H1 (cell line): ENCODE measurements at regions of chr11 and their contacts with region 1.

Region 1: DNA sequence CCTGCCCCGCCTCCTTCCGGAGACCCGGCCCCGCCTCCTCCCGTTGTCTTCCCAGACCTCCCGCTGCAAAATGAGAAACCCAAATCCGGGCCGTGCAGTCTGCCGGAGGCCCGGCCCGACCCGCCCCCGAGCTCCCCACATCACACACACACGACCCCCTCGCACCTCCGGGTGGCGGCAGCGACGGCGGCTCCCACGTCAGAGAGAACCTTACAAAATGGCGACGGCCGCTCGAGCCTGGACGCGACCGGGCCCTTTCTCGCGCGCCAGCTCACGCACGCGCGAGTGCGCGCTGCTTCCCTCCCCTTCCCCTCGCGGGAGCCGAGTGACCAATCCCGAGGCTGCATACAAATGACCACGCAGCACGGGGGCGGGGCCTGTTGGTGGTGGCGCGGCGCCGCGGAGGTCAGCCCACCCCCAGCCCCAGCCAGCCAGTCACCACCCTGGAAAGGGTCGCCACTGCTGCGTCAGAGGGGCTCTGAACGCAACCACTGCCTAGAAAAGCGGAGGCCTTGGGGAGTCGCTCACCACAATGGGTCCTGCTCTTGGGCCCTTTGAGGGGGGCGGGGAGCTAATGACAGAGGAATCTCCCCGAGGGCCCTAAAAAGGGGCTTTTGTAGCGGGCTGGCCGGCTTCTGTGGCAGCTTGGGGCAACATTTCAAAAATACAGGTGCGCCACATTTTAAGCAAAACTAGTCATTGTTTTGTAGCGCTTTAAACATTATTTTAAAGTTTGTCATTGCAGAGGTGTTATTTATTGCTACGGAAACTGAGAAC is at the start of gene RBM4B:
- DNase-seq: peak; percentile 92 to 98
- H3K4me3 ChIP-seq: peak within 1 kb of the TSS; percentile 69 to 86 (median 78)
- H3K27ac ChIP-seq: peak within 1 kb of the TSS; percentile 88
- H3K4me1 ChIP-seq: peaks cover 3 to 15% (median 8%) of the 10 kb centered on the region in 4 experiments; a peak in 5 of 7 replicates
- H3K27me3 ChIP-seq: no peaks in the 10 kb centered on the region
- CTCF ChIP-seq: no peak
- EP300 ChIP-seq: no peak
- POLR2A ChIP-seq: peak; percentile 77 to 88
- RAD21 ChIP-seq: no peak
- total RNA-seq, gene RBM4B: 27.5 and 30.6 TPM in 2 replicates

Region 2: DNA sequence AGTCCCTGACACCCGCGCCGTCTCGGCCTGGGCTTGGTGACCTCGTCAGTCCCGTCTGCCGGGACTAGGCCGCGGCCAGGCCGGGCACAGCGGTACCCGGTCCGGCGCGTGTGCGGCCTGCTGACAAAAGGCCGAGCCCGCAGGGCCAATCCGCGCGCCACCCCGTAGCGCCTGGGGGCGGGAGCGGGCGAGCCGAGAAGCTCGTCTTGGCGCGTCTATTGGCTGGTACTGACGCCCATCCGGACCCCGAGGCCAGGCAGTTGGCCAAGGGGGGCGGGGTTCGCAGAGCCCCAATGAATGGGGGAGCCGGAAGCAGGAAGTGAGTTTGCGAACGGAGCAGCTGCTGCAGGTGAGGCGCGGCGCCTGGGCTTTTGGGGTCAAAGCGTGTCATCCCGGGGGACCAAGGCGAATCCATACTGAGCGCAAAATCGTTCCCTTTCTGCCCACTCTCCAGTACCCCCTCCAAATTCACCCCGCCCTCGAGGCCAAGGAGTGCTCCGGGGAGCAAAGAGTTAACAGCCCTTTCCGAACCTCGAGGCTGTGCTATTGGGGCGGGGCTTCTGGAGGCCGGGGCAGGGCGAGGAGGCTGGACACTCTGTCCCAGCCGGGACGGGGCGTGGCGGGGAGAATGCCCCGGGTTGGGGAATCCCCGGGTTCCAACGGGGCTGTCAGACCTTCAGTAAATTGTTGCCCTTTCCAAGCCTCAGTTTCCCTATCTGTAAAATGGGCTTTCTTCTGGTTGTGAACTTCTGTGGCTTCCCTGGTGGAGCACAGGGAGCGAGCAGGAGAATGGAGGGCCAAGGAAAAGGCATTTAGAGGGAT is 197.5 kb before region 1 on chr11 and contains the start of gene DPP3:
- CTCF ChIA-PET with region 1: interaction called, 4 read pairs
- POLR2A ChIA-PET with region 1: interaction called, 27 read pairs
- DNase-seq: peak; percentile 93 to 98
- H3K4me3 ChIP-seq: peak within 1 kb of the TSS; percentile 76 to 94 (median 90)
- H3K27ac ChIP-seq: peak within 1 kb of the TSS; percentile 83; the same call in 1 of the 2 replicates
- H3K4me1 ChIP-seq: peaks cover 0 to 6% (median under 1%) of the 10 kb centered on the region in 4 experiments; a peak in 3 of 7 replicates
- H3K27me3 ChIP-seq: no peaks in the 10 kb centered on the region
- CTCF ChIP-seq: no peak
- EP300 ChIP-seq: 0 out of 3 replicates have a peak, but pooled peaks of 1 of the 2 experiments have one; percentile 2
- POLR2A ChIP-seq: peak; percentile 86 to 90
- RAD21 ChIP-seq: no peak
- total RNA-seq, gene DPP3: 82.7 and 86.4 TPM in 2 replicates

Region 3: GRCh38 chr11:66545701-66546367 is 132.0 kb before region 1 on chr11 and contains the start of gene ZDHHC24:
- CTCF ChIA-PET with region 1: interaction called, 4 read pairs
- POLR2A ChIA-PET with region 1: interaction called, 13 read pairs
- DNase-seq: peak; percentile 85 to 95
- H3K4me3 ChIP-seq: peak within 1 kb of the TSS; percentile 71 to 84 (median 79)
- H3K27ac ChIP-seq: no peak within 1 kb of the TSS
- H3K4me1 ChIP-seq: peaks cover 0 to 17% (median 11%) of the 10 kb centered on the region in 4 experiments; a peak in 6 of 7 replicates
- H3K27me3 ChIP-seq: no peaks in the 10 kb centered on the region
- CTCF ChIP-seq: no peak
- EP300 ChIP-seq: no peak
- POLR2A ChIP-seq: peak in 1 of 2 experiments; percentile 59; a peak in 1 of 3 replicates
- RAD21 ChIP-seq: no peak
- total RNA-seq, gene ZDHHC24: 7.0 and 8.4 TPM in 2 replicates

Region 4: GRCh38 chr11:66579017-66579606 is 98.7 kb before region 1 on chr11:
- CTCF ChIA-PET with region 1: interaction called, 4 read pairs
- POLR2A ChIA-PET with region 1: interaction called, 16 read pairs
- DNase-seq: peak in 1 of 2 experiments; percentile 97
- H3K4me3 ChIP-seq: no peak overlapping the region
- H3K27ac ChIP-seq: no peak overlapping the region
- H3K4me1 ChIP-seq: peaks cover 0 to 6% (median 4%) of the 10 kb centered on the region in 4 experiments; a peak in 5 of 7 replicates
- H3K27me3 ChIP-seq: peaks cover 0 to 6% (median 1%) of the 10 kb centered on the region in 4 experiments; a peak in 2 of 7 replicates
- CTCF ChIP-seq: peak; percentile 81 to 94 (median 90)
- EP300 ChIP-seq: 0 out of 3 replicates have a peak, but pooled peaks of 1 of the 2 experiments have one; percentile 26
- POLR2A ChIP-seq: no peak
- RAD21 ChIP-seq: peak; percentile 75 to 78

Region 5: DNA sequence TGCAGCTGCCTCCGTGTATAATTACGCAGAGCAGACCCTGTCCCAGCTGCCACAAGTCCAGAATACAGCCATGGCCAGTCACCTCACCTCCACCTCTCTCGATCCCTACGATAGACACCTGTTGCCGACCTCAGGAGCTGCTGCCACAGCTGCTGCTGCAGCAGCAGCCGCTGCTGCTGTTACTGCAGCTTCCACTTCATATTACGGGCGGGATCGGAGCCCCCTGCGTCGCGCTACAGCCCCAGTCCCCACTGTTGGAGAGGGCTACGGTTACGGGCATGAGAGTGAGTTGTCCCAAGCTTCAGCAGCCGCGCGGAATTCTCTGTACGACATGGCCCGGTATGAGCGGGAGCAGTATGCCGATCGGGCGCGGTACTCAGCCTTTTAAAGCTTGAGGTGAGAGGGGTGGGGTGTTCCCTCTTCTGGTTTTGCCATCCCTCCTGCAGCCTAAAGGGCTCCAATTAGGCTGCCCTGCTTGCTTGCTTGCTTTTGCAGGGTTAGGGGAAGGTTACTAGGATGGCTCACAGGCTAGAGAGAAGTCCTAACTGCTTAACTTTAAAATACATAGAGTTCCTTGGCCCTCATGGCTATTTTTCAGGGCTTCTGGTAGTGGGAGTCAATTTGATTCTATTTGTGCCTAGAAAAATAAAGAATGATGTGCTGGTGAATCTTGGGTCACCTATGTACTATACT is 33.9 kb before region 1 on chr11:
- CTCF ChIA-PET with region 1: interaction called, 5 read pairs
- POLR2A ChIA-PET with region 1: interaction called, 2,165 read pairs
- DNase-seq: no peak
- H3K4me3 ChIP-seq: peak overlapping the region in 1 of 4 experiments; percentile 5; a peak in 2 of 8 replicates
- H3K27ac ChIP-seq: no peak overlapping the region
- H3K4me1 ChIP-seq: peaks cover 0 to 20% (median 13%) of the 10 kb centered on the region in 4 experiments; a peak in 4 of 7 replicates
- H3K27me3 ChIP-seq: no peaks in the 10 kb centered on the region
- CTCF ChIP-seq: no peak
- EP300 ChIP-seq: no peak
- POLR2A ChIP-seq: peak; percentile 56 to 62; a peak in 2 of 3 replicates
- RAD21 ChIP-seq: no peak

Region 6: DNA sequence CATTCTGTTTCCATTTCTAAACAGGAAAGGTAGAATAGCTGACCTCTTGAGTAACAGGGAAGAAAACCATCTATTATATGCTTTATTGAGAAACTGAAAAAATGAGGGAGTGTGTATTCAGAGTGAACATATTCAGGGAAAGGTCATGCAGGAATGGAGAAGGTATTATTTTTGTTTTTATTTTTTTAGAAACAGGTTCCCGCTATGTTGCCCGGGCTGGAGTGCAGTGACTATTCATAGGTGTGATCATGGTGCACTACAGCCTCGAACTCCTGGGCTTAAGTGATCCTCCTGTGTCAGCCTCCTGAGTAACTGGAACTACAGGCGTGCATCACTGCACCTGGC is 156.7 kb after region 1 on chr11:
- CTCF ChIA-PET with region 1: interaction called, 14 read pairs
- POLR2A ChIA-PET with region 1: interaction called, 8 read pairs
- DNase-seq: no peak
- H3K4me3 ChIP-seq: no peak overlapping the region
- H3K27ac ChIP-seq: no peak overlapping the region
- H3K4me1 ChIP-seq: no peaks in the 10 kb centered on the region
- H3K27me3 ChIP-seq: no peaks in the 10 kb centered on the region
- CTCF ChIP-seq: no peak
- EP300 ChIP-seq: no peak
- POLR2A ChIP-seq: no peak
- RAD21 ChIP-seq: no peak

Region 7: DNA sequence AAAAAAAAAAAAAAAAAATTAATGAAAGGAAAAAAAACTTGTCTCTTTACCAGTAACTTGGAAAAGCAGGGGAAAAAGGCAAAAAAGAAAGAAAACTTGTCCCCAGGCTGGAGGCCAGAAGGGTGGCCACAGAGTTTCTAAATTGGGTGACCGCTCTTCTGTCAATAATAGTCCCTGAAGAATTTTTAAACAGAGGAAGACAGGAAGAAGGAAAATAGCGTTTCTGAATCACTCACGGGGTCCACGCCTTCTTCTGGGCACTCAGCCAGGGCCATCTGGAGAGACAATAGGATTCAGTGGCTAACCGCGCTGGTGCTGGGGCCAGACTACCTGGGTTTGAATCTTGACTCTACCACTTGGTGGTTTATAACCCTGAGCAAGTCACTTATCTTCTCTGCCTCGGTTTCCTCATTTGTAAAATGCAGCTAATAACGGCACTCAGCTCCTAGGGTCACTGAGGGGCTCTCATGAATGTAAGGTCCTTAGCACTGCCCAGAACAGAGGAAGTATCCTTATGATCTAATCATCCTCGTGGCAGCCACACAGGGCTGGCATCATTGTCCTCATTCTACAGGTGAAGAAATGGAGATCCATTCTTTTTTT is 304.3 kb after region 1 on chr11:
- CTCF ChIA-PET with region 1: no interaction called
- POLR2A ChIA-PET with region 1: no interaction called
- DNase-seq: no peak
- H3K4me3 ChIP-seq: no peak overlapping the region
- H3K27ac ChIP-seq: no peak overlapping the region
- H3K4me1 ChIP-seq: peaks cover 0 to under 1% (median 0%) of the 10 kb centered on the region in 4 experiments; a peak in 2 of 7 replicates
- H3K27me3 ChIP-seq: no peaks in the 10 kb centered on the region
- CTCF ChIP-seq: no peak
- EP300 ChIP-seq: no peak
- POLR2A ChIP-seq: no peak
- RAD21 ChIP-seq: no peak

Region 8: DNA sequence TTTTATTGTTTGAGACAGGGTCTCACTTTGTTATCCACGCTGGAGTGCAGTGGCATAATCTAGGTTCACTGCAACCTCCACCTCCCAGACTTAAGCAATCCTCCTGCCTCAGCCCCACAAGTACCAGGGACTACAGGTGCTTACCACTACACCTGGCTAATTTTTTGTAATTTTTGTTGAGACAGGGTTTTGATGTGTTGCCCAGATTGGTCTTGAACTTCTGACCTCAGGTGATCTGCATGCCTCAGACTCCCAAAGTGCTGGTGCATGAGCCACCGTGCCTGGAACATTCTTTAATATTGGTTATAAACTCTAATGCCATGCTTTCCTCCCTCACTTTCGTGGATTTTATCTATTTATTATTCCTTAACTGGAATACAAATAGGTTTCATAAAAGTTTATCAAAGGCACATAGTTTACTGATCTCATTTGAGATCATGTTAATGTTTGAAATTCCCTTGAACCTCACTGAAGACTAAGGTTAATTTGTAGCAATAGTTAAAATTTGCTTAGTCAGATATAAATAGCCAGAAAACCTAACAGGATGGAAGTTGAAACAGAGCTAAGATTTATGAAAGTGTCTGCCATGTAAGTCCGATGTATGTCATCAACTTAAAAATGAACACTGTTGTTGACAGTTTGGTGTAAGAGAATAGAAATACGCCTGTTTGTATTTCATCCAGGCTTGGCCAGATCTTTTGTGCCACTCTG is 468.9 kb after region 1 on chr11:
- CTCF ChIA-PET with region 1: no interaction called
- POLR2A ChIA-PET with region 1: no interaction called
- DNase-seq: no peak
- H3K4me3 ChIP-seq: no peak overlapping the region
- H3K27ac ChIP-seq: no peak overlapping the region
- H3K4me1 ChIP-seq: no peaks in the 10 kb centered on the region
- H3K27me3 ChIP-seq: no peaks in the 10 kb centered on the region
- CTCF ChIP-seq: no peak
- EP300 ChIP-seq: no peak
- POLR2A ChIP-seq: no peak
- RAD21 ChIP-seq: no peak